K562 (cell line): ENCODE measurements at regions of chr4 and their contacts with region 1.

Region 1: GRCh38 chr4:126850286-126850685 is 782.5 kb upstream of the INTU start:
- DNase-seq: peak; percentile 68 to 91 (median 76)
- ATAC-seq: peak; percentile 96
- H3K4me3 ChIP-seq: no peak overlapping the region
- H3K27ac ChIP-seq: peak overlapping the region; percentile 78
- H3K4me1 ChIP-seq: peaks cover 0 to 21% of the 10 kb centered on the region in 2 experiments; a peak in 4 of 5 replicates
- H3K27me3 ChIP-seq: no peaks in the 10 kb centered on the region
- CTCF ChIP-seq: no peak
- EP300 ChIP-seq: peak; percentile 97
- POLR2A ChIP-seq: no peak
- RAD21 ChIP-seq: peak in 1 of 2 experiments; percentile 11; a peak in 1 of 4 replicates

Region 2: GRCh38 chr4:126738926-126739325 is 111.4 kb before region 1 on chr4:
- CTCF ChIA-PET with region 1: no interaction called
- POLR2A ChIA-PET with region 1: no interaction called
- in situ Hi-C with region 1: no loop called
- intact Hi-C with region 1: loop called (anchors 5 kb)
- DNase-seq: no peak
- ATAC-seq: no peak
- H3K4me3 ChIP-seq: no peak overlapping the region
- H3K27ac ChIP-seq: peak overlapping the region; percentile 78
- H3K4me1 ChIP-seq: peaks cover 0 to 46% of the 10 kb centered on the region in 2 experiments; a peak in 4 of 5 replicates
- H3K27me3 ChIP-seq: no peaks in the 10 kb centered on the region
- CTCF ChIP-seq: no peak
- EP300 ChIP-seq: no peak
- POLR2A ChIP-seq: no peak
- RAD21 ChIP-seq: no peak

Region 3: GRCh38 chr4:126794363-126794762 is 55.9 kb before region 1 on chr4:
- CTCF ChIA-PET with region 1: no interaction called
- POLR2A ChIA-PET with region 1: no interaction called
- in situ Hi-C with region 1: no loop called
- intact Hi-C with region 1: loop called (anchors 5 kb)
- DNase-seq: peak in 1 of 4 experiments; percentile 46
- ATAC-seq: peak; percentile 66
- H3K4me3 ChIP-seq: no peak overlapping the region
- H3K27ac ChIP-seq: peak overlapping the region; percentile 35
- H3K4me1 ChIP-seq: peaks cover 0 to 7% of the 10 kb centered on the region in 2 experiments; a peak in 2 of 5 replicates
- H3K27me3 ChIP-seq: no peaks in the 10 kb centered on the region
- CTCF ChIP-seq: no peak
- EP300 ChIP-seq: peak; percentile 70
- POLR2A ChIP-seq: no peak
- RAD21 ChIP-seq: peak in 1 of 2 experiments; percentile 14; a peak in 2 of 4 replicates

Region 4: DNA sequence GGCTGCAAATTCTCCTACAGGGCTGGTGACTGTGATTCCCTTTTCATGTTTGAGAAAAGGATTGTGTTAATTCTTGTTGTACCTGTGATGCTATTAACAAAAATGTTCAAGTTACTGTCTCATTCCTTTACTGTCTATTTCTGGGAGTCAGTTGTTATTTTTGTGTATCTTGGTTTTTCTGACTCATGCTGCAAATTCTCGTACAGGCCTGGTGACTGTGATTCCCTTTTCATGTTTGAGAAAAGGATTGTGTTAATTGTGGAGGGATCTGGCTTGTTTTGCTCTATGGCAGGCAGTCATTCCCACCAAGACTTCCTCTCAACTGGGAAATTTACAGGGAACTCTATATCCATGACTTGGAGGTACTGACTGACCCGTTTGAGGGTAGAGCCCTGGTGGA is 89.1 kb after region 1 on chr4:
- CTCF ChIA-PET with region 1: no interaction called
- POLR2A ChIA-PET with region 1: no interaction called
- in situ Hi-C with region 1: no loop called
- intact Hi-C with region 1: no loop called
- DNase-seq: no peak
- ATAC-seq: peak; percentile 17; the same call in 2 of the 3 replicates
- H3K4me3 ChIP-seq: no peak overlapping the region
- H3K27ac ChIP-seq: no peak overlapping the region; the same call in 2 of the 3 replicates
- H3K4me1 ChIP-seq: no peaks in the 10 kb centered on the region
- H3K27me3 ChIP-seq: no peaks in the 10 kb centered on the region
- CTCF ChIP-seq: no peak
- EP300 ChIP-seq: no peak
- POLR2A ChIP-seq: no peak
- RAD21 ChIP-seq: no peak